ENCODE measurements at regions of chr20 and their contacts with region 1.

Region 1: DNA sequence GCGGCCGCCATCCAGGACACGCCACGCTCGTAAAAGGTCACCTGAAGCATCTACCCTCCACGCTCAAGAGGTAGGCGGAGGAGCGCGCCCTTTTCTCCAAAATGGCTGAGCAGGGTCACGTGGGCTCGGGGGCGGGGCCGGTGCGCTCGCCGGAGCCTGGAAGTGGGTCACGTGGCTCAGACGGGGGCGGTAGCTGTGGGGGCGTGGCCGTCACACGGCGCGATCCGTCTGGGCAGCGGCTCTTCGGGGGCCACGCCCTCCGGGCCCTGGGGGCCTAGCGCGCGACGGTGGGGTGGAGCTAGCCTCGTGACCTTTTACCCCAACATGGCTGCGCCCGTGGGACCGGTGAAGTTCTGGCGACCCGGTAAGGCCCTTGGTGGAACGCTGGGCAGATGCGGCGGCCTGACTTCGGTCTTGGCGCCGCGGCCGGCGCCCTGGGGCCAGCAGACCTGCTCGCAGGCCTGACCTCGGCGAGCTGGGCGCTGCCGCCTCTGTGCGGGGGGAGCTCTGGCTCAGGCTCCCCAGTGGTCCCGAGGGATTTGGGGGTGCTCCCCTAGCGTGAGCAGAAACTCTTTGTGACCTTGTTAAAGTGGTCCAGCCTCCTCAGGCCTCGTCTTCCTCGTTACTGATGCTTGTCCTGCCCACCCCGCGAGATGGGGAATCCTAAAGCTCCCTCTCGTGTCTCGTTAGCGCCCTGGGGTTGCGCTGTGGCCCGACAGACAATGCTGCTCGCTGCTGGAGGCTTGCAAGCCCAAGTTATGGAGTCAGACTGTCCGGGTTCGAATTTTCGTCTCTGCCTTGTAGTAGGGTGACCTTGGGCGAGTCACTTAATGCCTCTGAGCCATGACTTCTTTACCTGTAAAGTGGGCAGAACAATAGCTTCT is at the start of gene DHX35:
- DNase-seq: peak; percentile 95 to 100 (median 99)

Region 2: GRCh38 chr20:38926142-38926933 is 35.9 kb before region 1 on chr20 and contains the start of gene FAM83D:
- intact Hi-C with region 1: loop called (anchors 5 kb)
- DNase-seq: peak; percentile 89 to 98 (median 96)

Region 3: DNA sequence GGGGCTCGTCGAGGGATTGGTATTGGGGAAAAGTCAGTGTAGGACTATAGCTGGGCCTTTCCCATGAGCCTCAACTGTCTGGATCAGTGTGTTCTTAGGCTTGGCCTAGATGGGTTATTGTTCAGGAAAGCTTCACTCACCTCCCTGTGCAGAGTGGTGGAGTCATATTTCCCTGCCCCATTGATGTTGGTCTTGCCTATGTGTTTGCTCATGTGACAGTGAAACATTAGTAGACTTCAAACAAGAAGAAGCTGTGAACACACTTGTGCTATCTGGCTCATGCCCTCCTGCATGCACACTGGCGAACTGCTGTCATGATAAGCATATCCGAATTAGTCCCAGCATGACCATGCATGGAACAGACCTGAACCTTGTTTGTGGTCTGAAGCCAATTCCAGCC is 170.9 kb after region 1 on chr20:
- intact Hi-C with region 1: no loop called
- DNase-seq: no peak

Measured in head of caudate nucleus (tissue), 42 donors.